ENCODE measurements at regions of chr13 and their contacts with region 1.

Region 1: DNA sequence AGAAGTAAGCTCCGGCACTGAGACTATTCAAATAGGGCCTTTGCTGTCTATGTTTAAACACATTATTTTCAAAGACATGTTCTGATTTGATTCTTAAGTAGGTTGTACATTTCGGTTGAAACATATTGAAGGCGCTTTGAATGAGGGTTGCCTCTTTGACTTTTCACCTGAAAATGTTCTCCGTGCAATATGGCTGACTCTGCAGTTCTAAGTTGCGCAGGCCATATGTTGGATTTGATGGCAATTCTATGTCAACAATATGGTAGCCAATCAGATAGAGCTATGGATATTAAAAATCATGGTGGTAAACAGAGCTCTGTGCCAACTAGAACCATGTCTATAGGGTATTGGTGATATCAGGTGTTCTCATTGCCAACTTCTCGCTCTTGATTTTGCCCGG is 307.3 kb downstream of the NALCN start:
- DNase-seq: no peak
- H3K4me3 ChIP-seq: no peak overlapping the region
- H3K27ac ChIP-seq: no peak overlapping the region
- H3K27me3 ChIP-seq: no peaks in the 10 kb centered on the region
- CTCF ChIP-seq: no peak

Region 2: DNA sequence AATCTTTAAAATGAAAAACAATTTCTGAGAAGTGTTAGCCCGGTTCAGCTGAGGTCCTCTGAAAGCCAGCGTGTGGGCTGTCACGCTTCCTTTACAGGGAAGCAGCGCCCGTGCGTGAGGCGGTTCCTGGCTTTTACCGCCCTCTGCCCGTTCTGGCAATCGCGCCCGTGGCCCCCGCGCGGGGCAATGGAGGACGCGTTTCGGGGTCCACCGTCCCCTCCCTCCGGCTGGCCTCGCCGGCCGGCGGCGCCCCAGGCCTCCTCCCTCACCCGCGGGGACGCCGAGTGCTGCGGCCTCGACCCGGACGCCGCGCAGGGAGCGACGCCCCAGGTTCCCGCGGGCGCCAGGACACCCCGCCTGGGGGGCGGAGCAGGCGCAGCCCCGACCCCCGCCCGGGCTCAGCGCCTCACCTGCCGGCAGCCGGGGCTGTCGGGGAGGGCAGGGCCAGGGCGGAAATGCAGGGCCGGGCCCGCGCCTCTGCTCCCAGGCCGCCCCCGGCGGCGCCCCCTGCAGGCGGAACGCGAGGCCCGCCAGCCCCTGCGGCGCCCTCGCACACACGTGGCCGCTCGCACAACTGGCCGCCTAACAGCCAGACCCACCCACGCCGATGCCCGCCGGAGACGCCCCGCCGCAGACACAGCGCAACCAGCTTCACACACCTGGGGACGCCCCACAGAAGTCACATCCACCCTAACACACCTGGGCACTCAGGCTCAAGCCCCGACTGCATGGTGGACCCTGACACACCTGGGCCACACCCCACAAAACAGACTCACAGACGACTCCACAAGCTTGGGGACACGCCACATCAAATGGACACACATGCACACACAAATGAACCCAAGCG is 520.5 kb before region 1 on chr13 and contains the start of gene GGACT:
- intact Hi-C with region 1: loop called in 1 of 2 experiments (anchors 10 kb)
- DNase-seq: peak in 8 of 10 donors; percentile 25 to 77 (median 47)
- H3K4me3 ChIP-seq: peak within 1 kb of the TSS; percentile 37 to 81 (median 67)
- H3K27ac ChIP-seq: peak within 1 kb of the TSS in 51 of 59 donors; percentile 0 to 84 (median 66)
- H3K27me3 ChIP-seq: no peaks in the 10 kb centered on the region
- CTCF ChIP-seq: peak in 53 of 56 donors; percentile 25 to 86 (median 58)
- total RNA-seq, gene GGACT: 0.56 to 10.3 (median 2.8) TPM

Region 3: DNA sequence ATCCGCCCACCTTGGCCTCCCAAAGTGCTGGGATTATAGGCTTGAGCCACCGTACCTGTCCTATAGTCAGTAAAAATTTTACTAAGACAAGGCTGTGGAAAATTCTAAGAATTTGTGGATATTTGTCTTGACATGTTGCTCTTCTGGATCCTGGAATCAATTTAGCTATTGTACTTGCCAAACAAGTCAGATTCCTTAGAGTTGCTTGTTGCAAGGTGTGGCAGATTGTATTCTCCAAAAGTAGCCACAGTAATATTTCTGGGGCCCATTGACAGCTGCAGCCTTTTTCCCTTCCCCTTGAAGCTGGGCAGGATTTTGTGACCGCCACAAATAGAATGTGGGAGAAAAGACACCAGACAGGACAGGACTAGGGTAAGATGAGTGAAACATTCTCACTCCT is 335.6 kb before region 1 on chr13:
- intact Hi-C with region 1: no loop called
- DNase-seq: no peak
- H3K4me3 ChIP-seq: no peak overlapping the region
- H3K27ac ChIP-seq: no peak overlapping the region
- H3K27me3 ChIP-seq: no peaks in the 10 kb centered on the region
- CTCF ChIP-seq: no peak

Region 4: DNA sequence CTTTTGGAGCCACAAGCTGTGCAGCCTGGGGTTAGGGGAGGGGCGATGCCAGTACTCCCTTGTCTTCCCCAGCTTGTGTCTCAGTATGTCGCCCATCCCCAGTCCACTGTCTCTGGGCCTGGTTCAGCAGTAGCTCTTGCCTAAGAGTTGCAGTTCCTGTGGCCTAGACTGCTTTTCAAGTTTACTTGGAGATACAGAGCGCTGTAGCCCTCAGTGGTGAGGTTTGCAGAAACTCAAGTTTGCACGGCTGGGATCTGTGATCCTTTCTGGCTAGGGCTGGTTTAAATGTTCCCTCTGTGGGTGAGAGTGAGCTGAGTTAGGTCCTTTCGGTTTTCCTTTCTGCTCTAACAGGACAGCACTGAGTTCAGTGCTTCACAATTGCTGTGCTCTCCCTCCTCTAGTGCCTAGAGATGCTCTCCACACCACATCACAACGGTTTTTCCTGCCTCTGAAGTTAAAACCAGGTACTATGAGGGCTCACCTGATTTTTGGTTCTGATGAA is 73.8 kb before region 1 on chr13:
- intact Hi-C with region 1: no loop called
- DNase-seq: no peak
- H3K4me3 ChIP-seq: no peak overlapping the region
- H3K27ac ChIP-seq: no peak overlapping the region
- H3K27me3 ChIP-seq: no peaks in the 10 kb centered on the region
- CTCF ChIP-seq: no peak